ENCODE measurements at regions of chr15 and their contacts with region 1.

Region 1: DNA sequence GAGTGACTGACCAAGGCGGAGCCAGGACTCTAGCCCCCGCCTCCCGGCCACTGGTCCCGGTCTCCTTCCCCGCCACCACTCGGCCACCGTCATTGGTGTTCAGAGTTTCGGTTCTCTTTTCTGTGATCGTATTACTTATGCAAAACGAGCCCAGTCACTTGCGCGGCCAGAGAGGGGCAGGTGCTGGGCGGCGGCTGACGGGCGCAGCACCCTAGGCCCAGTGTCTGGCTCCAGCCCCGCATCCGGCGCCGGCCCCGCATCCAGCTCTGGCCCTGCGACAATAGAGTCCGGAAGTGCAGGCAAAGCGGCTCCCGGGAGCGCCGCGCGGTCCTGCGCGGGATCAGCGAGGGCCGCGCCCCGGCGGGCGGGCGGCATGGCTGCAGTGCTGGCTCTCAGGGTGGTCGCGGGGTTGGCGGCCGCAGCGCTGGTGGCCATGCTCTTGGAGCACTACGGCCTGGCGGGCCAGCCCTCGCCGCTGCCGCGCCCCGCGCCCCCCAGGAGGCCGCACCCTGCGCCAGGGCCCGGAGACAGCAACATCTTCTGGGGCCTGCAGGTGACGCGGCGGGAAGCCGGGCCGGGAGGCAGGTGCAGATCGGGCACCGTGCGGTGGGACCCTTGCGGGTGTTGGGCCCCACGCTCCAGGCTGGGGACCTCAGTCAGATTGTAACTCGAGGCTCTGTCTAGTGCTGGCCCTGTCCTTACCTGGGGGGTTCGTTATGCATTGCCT is at the start of gene TMEM62:
- DNase-seq: peak; percentile 55 to 82 (median 76)
- H3K4me3 ChIP-seq: peak within 1 kb of the TSS; percentile 59 to 97 (median 89)
- H3K27ac ChIP-seq: peak within 1 kb of the TSS; percentile 18 to 95 (median 87)
- H3K27me3 ChIP-seq: no peaks in the 10 kb centered on the region
- CTCF ChIP-seq: peak in 15 of 56 donors; percentile 12 to 33 (median 22)
- total RNA-seq, gene TMEM62: 21.2 to 46.2 (median 31.3) TPM

Region 2: DNA sequence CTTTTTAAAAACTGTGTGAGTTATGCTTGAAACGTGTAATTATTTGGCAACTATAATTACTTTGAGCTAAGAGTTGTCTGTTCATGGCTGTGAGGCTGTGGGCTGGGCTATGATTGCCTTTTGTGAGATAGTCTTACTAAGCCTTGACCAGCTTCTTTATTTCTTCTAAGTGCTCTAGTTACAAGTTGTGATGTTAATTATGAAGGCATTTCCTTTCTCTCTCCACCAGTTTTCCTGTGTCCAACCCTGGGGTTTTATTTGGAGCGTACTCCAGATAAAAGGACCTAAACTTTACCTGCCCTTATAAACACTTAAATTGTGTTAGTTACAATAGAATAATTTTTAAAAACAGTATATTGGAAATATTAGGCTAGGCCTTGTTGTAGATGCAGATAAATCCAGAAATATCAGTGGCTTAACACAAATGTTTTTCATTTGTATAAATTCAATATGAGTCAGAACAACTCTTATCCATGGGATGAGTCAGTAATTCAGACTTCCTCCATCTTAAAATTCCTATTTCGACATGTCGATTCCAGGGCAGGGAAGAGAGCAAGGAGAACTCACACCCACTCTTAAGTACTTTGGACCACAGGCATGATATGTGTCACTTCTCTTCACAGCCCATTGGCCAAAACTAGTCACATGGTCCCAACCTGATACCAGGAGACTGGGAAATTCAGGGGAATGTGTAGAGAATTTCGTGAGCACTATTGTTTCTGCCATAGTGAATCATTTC is 16.8 kb after region 1 on chr15:
- intact Hi-C with region 1: no loop called
- DNase-seq: no peak
- H3K4me3 ChIP-seq: no peak overlapping the region
- H3K27ac ChIP-seq: no peak overlapping the region
- H3K27me3 ChIP-seq: no peaks in the 10 kb centered on the region
- CTCF ChIP-seq: no peak

Region 3: DNA sequence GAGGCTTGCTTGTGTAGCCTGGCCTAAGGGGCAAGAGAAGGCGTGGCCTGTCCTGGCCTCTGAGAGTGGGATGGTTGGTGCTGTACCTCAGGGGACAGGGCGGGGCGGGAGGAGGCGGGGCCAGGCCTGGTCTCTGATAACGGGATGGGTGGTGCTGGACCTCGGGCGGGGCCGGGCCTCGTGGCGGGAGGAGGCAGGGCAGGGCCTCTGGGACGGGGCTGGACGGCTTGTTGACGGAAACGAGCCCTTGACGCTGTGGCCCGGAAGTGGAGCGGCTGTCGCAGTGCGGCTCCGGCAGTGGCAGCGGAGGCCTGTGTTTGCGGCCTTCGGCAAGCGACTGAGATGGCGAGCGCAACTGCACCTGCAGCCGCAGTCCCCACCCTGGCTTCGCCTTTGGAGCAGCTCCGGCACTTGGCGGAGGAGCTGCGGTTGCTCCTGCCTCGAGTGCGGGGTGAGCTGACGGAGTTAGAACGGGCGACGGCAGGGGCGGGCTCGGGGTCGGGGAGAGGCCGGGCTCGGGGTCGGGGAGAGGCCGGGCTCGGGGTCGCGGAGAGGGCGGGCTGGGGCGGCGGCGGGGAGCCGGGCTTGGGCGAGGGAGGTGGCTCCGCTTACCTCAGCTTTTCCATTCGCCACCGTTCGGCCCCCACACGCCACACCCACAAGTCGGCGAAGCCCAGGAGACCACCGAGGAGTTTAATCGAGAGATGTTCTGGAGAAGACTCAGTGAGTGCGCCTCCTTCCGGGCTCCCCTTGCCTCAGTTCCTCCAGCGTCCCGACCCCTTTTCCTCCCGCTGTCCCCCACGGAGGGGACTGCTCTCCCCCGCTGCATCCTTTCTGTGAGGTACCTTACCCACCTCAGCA is 51.8 kb after region 1 on chr15 and contains the start of gene CCNDBP1:
- intact Hi-C with region 1: loop called in 1 of 2 experiments (anchors 5 kb)
- DNase-seq: peak; percentile 71 to 92 (median 84)
- H3K4me3 ChIP-seq: peak within 1 kb of the TSS; percentile 61 to 92 (median 82)
- H3K27ac ChIP-seq: peak within 1 kb of the TSS; percentile 52 to 96 (median 88)
- H3K27me3 ChIP-seq: no peaks in the 10 kb centered on the region
- CTCF ChIP-seq: peak in 54 of 56 donors; percentile 16 to 62 (median 44)
- total RNA-seq, gene CCNDBP1: 32.7 to 77.7 (median 59.5) TPM

Region 4: DNA sequence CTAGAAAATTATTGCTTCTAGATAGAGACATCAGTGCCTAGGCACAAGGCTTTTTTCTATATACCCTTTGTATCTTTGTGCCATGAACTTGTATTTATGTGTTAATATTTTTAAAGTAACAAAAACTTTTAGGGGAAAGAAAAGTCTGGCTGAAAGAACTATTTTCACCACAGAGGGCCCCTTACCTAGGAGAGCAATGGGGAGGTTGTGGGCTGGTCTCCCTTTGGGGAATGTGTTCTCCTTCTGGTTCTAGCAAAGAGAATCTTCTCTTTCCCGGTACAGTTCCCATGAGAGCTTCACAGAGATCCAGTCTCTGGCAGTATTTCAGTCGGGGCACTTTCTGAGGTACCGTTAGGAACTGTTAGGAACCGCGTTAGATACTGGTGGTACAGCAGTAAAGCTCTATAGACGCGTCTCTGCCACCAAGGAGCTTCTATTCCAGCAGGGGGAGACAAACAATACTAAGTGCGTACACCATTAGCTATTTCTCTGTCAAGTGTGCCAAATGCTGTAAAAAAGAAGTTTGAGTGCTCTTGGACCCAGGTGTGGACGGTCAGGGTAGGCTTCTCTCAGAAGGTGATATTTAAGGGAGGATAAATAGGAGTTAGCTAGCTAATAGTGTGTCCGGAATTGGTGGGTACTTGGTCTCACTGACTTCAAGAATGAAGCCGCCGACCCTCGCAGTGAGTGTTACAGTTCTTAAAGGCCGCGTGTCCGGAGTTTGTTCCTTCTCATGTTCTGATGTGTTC is 91.8 kb after region 1 on chr15:
- intact Hi-C with region 1: no loop called
- DNase-seq: peak in 3 of 10 donors; percentile 23 to 39 (median 36)
- H3K4me3 ChIP-seq: no peak overlapping the region
- H3K27ac ChIP-seq: no peak overlapping the region
- H3K27me3 ChIP-seq: peaks cover 0 to 5% (median 0%) of the 10 kb centered on the region in 45 donors
- CTCF ChIP-seq: peak; percentile 10 to 82 (median 69)